CD8-positive, alpha-beta T cell (primary cell): ENCODE measurements at regions of chr15 and their contacts with region 1.

Region 1: GRCh38 chr15:84748274-84749110 is at the start of gene ZNF592:
- DNase-seq: peak; percentile 63 to 90 (median 80)
- ATAC-seq: peak; percentile 67
- H3K4me3 ChIP-seq: peak within 1 kb of the TSS; percentile 74 to 90
- H3K4me3 Mint-ChIP-seq: peak within 1 kb of the TSS; percentile 99
- H3K27ac ChIP-seq: peak within 1 kb of the TSS; percentile 82 to 94
- H3K27ac Mint-ChIP-seq: peak within 1 kb of the TSS; percentile 100
- H3K4me1 ChIP-seq: peaks cover 46% of the 10 kb centered on the region
- H3K4me1 Mint-ChIP-seq: peaks cover 72% of the 10 kb centered on the region
- H3K27me3 ChIP-seq: no peaks in the 10 kb centered on the region
- H3K27me3 Mint-ChIP-seq: no peaks in the 10 kb centered on the region
- CTCF ChIP-seq: no peak
- total RNA-seq, gene ZNF592: 24.6 to 25.1 TPM

Region 2: DNA sequence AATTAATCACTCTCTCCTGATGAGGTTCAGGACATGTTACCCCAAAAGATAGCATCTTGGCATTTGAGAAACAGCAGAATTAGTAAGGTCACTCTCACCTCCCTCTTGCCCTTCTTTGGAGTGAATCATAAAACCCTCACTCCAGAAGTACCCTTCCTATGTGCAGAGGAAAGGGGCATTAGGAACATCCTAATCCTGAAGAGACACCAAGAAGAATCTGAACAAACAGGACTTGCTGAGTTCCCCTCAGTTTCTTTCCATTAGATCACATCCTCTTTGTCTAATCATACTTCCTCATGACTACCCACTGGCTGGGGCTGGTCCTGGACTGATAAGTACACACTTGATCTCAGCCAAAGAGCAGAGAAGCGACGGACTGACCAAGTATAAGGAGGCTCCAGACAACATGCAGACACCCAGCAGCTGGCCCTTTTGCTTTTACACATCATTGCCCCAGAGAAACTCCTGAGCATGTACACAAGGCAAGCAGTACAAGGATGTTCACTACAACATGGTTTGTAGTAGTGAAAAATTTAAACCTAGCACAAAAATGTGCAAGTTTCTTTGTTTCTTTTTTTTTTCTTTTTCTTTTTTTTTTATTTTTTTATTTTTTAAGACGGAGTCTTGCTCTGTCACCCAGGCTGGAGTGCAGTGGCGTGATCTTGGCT is 1656.0 kb before region 1 on chr15:
- CTCF ChIA-PET with region 1: no interaction called
- POLR2A ChIA-PET with region 1: no interaction called
- intact Hi-C with region 1: no loop called
- DNase-seq: no peak
- ATAC-seq: no peak
- H3K4me3 ChIP-seq: no peak overlapping the region
- H3K4me3 Mint-ChIP-seq: no peak overlapping the region
- H3K27ac ChIP-seq: no peak overlapping the region
- H3K27ac Mint-ChIP-seq: no peak overlapping the region
- H3K4me1 ChIP-seq: no peaks in the 10 kb centered on the region
- H3K4me1 Mint-ChIP-seq: peaks cover 6% of the 10 kb centered on the region
- H3K27me3 ChIP-seq: no peaks in the 10 kb centered on the region
- H3K27me3 Mint-ChIP-seq: peaks cover 3% of the 10 kb centered on the region
- CTCF ChIP-seq: no peak

Region 3: DNA sequence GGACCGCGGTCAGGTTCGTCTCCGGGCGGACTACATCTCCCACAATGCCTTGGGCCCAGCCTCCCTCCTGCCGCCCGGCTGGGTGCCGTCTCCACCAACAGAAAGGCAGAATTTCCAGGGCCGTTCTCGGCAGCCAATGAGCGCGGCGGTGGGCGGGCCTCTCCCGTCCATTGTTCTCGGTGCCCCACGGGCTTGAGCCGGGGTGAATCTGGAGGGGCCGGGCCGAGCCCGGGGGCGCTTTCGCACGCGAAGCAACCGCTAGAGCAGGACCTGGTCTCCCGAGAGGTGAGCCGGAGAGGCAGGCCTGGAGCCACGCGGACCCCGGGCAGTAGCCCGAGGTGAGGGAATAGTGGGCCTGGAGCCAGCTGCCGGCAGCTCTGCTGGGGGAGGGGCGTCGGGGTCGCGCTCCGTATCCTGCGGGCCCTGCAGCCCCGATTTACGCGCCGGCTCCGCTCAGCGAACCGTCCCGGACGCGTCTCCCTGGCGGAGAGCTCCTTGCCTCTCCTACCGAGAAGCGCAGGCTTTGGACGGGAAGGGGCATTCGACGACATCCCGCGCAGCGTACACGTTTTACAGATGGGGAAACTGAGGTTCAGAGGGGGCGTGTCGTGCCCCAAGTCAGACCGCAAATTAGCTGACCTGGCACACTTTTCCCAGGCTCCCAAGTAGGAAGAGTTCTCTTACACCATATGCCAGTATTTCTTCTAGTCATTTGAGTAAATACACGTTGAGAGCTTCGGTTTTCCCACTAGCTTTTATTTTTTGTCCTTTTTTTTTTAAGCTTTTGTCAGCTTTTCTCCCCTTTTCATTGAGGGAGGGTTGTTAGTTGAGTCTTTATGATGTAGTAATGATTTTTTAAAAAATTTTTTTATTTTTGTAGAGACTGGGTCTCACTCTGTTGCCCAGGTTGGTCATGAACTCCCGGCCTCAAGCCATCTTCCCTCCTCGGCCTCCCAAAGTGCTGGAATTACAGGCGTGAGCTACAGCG is 147.3 kb before region 1 on chr15 and contains the start of gene ZSCAN2:
- CTCF ChIA-PET with region 1: interaction called, 4 read pairs
- POLR2A ChIA-PET with region 1: interaction called, 5 read pairs
- intact Hi-C with region 1: loop called in 1 of 2 experiments (anchors 1 kb)
- DNase-seq: peak; percentile 81 to 95 (median 92)
- ATAC-seq: peak; percentile 95
- H3K4me3 ChIP-seq: peak within 1 kb of the TSS; percentile 93 to 100
- H3K4me3 Mint-ChIP-seq: peak within 1 kb of the TSS; percentile 99
- H3K27ac ChIP-seq: peak within 1 kb of the TSS; percentile 34 to 58
- H3K27ac Mint-ChIP-seq: peak within 1 kb of the TSS; percentile 93
- H3K4me1 ChIP-seq: peaks cover 42% of the 10 kb centered on the region
- H3K4me1 Mint-ChIP-seq: peaks cover 74% of the 10 kb centered on the region
- H3K27me3 ChIP-seq: no peaks in the 10 kb centered on the region
- H3K27me3 Mint-ChIP-seq: no peaks in the 10 kb centered on the region
- CTCF ChIP-seq: no peak
- total RNA-seq, gene ZSCAN2: 2.7 to 4.4 TPM

Region 4: DNA sequence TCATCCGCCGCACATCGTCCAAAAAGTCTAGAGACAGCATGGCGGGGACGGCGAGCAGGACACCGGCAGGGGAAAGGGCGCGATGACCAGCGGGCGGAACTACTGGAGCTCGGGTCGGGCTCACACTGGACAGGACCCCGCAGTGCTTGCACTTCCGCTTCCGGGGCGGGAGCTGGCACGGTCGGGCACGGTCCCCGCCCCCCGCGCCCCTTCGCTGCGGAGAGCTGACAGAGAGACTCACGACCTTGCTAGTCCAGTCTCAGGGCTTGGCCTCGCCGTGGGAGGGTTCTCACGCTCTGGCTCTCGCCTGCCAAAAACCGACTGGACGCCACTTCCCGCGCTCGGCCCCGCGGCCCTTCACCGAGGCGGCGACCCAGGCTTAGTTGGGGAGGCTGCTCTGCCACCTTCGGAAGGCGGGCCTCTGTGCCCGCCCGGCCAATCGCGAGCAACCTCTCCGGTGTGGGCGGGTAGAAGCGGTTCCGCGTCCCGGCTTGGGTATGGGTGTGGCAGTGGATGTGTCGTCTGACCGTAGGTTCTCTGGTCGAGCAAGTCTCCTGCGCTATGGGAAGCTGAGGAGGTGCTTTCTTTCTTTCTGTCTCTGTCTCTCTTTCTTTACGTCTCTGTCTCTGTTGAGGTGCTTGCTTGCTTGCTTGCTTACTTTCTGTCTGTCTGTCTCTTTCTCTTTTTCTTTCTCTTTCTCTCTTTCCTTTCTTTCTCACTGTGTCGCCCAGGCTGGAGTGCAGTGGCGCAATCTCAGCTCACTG is 32.3 kb before region 1 on chr15 and contains the start of gene SEC11A:
- CTCF ChIA-PET with region 1: interaction called, 40 read pairs
- POLR2A ChIA-PET with region 1: interaction called, 98 read pairs
- intact Hi-C with region 1: loop called (anchors 1 kb)
- DNase-seq: peak; percentile 84 to 95 (median 90)
- ATAC-seq: peak; percentile 94
- H3K4me3 ChIP-seq: peak within 1 kb of the TSS; percentile 94 to 98
- H3K4me3 Mint-ChIP-seq: peak within 1 kb of the TSS; percentile 96
- H3K27ac ChIP-seq: peak within 1 kb of the TSS; percentile 74 to 86
- H3K27ac Mint-ChIP-seq: peak within 1 kb of the TSS; percentile 97
- H3K4me1 ChIP-seq: peaks cover 37% of the 10 kb centered on the region
- H3K4me1 Mint-ChIP-seq: peaks cover 44% of the 10 kb centered on the region
- H3K27me3 ChIP-seq: no peaks in the 10 kb centered on the region
- H3K27me3 Mint-ChIP-seq: no peaks in the 10 kb centered on the region
- CTCF ChIP-seq: no peak
- total RNA-seq, gene SEC11A: 36.4 to 38.5 TPM

Region 5: DNA sequence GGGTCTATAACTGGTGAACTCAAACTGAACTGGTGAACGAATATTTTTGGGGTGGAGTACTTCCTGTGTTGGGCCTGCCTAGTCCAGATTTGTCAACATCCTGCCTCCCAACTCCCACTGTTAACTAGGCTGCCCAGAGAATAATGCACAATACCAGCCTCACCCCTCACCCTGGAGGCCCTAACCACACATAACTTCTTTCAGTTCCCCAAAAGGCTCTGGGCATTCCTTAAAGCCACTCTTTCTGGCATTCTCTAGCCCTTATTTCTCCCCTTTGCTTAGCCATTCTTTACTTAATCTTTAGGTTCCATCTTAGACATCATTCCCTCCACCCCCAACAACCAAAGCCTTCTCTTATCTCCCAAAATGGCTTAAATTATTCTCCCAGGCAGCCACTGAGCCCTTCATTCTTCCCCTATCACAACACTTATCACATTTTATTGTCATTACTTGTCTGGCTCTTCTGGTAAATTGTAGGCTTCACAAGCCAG is 23.4 kb before region 1 on chr15:
- CTCF ChIA-PET with region 1: interaction called, 40 read pairs
- POLR2A ChIA-PET with region 1: interaction called, 14 read pairs
- intact Hi-C with region 1: no loop called
- DNase-seq: peak in 5 of 9 experiments; percentile 22 to 66 (median 40)
- ATAC-seq: peak; percentile 64
- H3K4me3 ChIP-seq: peak overlapping the region in 1 of 2 experiments; percentile 17
- H3K4me3 Mint-ChIP-seq: peak overlapping the region; percentile 72
- H3K27ac ChIP-seq: peak overlapping the region; percentile 19 to 81
- H3K27ac Mint-ChIP-seq: peak overlapping the region; percentile 96
- H3K4me1 ChIP-seq: peaks cover 44% of the 10 kb centered on the region
- H3K4me1 Mint-ChIP-seq: peaks cover 56% of the 10 kb centered on the region
- H3K27me3 ChIP-seq: no peaks in the 10 kb centered on the region
- H3K27me3 Mint-ChIP-seq: no peaks in the 10 kb centered on the region
- CTCF ChIP-seq: no peak

Region 6: GRCh38 chr15:84734794-84735479 is 13.6 kb before region 1 on chr15:
- CTCF ChIA-PET with region 1: interaction called, 5 read pairs
- POLR2A ChIA-PET with region 1: interaction called, 81 read pairs
- intact Hi-C with region 1: loop called (anchors 1 kb)
- DNase-seq: peak; percentile 21 to 89 (median 76)
- ATAC-seq: peak; percentile 85
- H3K4me3 ChIP-seq: peak overlapping the region; percentile 36 to 44
- H3K4me3 Mint-ChIP-seq: peak overlapping the region; percentile 77
- H3K27ac ChIP-seq: peak overlapping the region; percentile 7 to 62
- H3K27ac Mint-ChIP-seq: peak overlapping the region; percentile 92
- H3K4me1 ChIP-seq: peaks cover 47% of the 10 kb centered on the region
- H3K4me1 Mint-ChIP-seq: peaks cover 46% of the 10 kb centered on the region
- H3K27me3 ChIP-seq: no peaks in the 10 kb centered on the region
- H3K27me3 Mint-ChIP-seq: no peaks in the 10 kb centered on the region
- CTCF ChIP-seq: no peak

Region 7: GRCh38 chr15:85073556-85074194 is 325.2 kb after region 1 on chr15:
- CTCF ChIA-PET with region 1: no interaction called
- POLR2A ChIA-PET with region 1: no interaction called
- intact Hi-C with region 1: no loop called
- DNase-seq: no peak
- ATAC-seq: no peak
- H3K4me3 ChIP-seq: no peak overlapping the region
- H3K4me3 Mint-ChIP-seq: no peak overlapping the region
- H3K27ac ChIP-seq: no peak overlapping the region
- H3K27ac Mint-ChIP-seq: no peak overlapping the region
- H3K4me1 ChIP-seq: no peaks in the 10 kb centered on the region
- H3K4me1 Mint-ChIP-seq: no peaks in the 10 kb centered on the region
- H3K27me3 ChIP-seq: no peaks in the 10 kb centered on the region
- H3K27me3 Mint-ChIP-seq: no peaks in the 10 kb centered on the region
- CTCF ChIP-seq: no peak